Panc1 (cell line): ENCODE measurements at regions of chr4 and their contacts with region 1.

Region 1: GRCh38 chr4:167989815-167990214 is 102.5 kb upstream of the ANXA10 start:
- DNase-seq: peak; percentile 2
- ATAC-seq: no peak
- H3K4me3 ChIP-seq: no peak overlapping the region
- H3K27ac ChIP-seq: no peak overlapping the region
- H3K4me1 ChIP-seq: no peaks in the 10 kb centered on the region
- H3K27me3 ChIP-seq: no peaks in the 10 kb centered on the region
- CTCF ChIP-seq: peak; percentile 38; the same call in 1 of the 2 replicates

Region 2: GRCh38 chr4:168153596-168154440 is 164.0 kb after region 1 on chr4:
- CTCF ChIA-PET with region 1: interaction called, 10 read pairs
- POLR2A ChIA-PET with region 1: no interaction called
- in situ Hi-C with region 1: no loop called
- intact Hi-C with region 1: no loop called
- DNase-seq: peak; percentile 51
- ATAC-seq: peak; percentile 86
- H3K4me3 ChIP-seq: peak overlapping the region; percentile 11 to 19; a peak in 3 of 4 replicates
- H3K27ac ChIP-seq: no peak overlapping the region
- H3K4me1 ChIP-seq: no peaks in the 10 kb centered on the region
- H3K27me3 ChIP-seq: no peaks in the 10 kb centered on the region
- CTCF ChIP-seq: peak; percentile 73